ENCODE measurements at regions of chr15 and their contacts with region 1.

Region 1: DNA sequence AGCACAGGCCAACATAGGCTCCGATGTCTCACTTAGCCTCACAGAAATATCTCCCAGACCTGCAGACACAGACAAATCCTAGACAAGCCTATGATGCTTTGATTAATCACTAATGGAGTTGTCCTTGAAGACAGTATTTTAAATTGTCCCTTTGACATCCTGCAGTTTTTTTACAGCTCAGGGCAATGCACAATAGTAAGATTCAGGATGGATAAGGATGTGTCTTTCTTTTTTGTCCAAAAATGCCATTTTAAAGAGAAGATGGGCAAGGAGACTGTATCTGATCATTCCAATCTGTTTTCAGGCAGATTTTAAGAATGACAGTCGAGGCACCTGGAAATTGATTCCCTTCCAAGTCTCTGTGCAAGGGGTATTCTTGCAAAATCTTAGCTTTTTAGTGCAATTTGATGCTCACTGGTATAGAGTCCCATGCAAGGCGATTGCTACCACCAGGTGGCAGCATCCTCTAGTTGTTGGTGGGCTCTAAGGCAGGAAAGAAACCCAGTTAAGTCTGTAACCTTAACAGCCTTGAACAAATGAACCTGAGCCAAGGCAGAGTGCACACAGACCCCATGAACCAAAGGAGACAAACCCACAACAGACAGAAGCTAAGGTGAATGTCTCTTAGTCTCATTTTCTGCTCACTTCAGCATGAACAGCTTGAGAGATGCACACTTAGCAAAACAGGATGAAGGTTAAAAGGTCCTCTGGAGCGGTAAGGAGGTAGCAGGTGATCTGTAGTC is 51.2 kb upstream of the MINAR1 start:
- DNase-seq: peak; percentile 82
- ATAC-seq: peak; percentile 88
- H3K4me3 Mint-ChIP-seq: no peak overlapping the region
- H3K27ac Mint-ChIP-seq: no peak overlapping the region
- H3K4me1 Mint-ChIP-seq: no peaks in the 10 kb centered on the region
- H3K27me3 Mint-ChIP-seq: no peaks in the 10 kb centered on the region

Region 2: GRCh38 chr15:79332831-79333516 is 48.0 kb before region 1 on chr15:
- CTCF ChIA-PET with region 1: interaction called, 27 read pairs
- POLR2A ChIA-PET with region 1: no interaction called
- DNase-seq: no peak
- ATAC-seq: no peak
- H3K4me3 Mint-ChIP-seq: no peak overlapping the region
- H3K27ac Mint-ChIP-seq: no peak overlapping the region
- H3K4me1 Mint-ChIP-seq: no peaks in the 10 kb centered on the region
- H3K27me3 Mint-ChIP-seq: no peaks in the 10 kb centered on the region

Region 3: GRCh38 chr15:79364571-79365240 is 16.2 kb before region 1 on chr15:
- CTCF ChIA-PET with region 1: interaction called, 26 read pairs
- POLR2A ChIA-PET with region 1: no interaction called
- DNase-seq: no peak
- ATAC-seq: no peak
- H3K4me3 Mint-ChIP-seq: no peak overlapping the region
- H3K27ac Mint-ChIP-seq: no peak overlapping the region
- H3K4me1 Mint-ChIP-seq: no peaks in the 10 kb centered on the region
- H3K27me3 Mint-ChIP-seq: no peaks in the 10 kb centered on the region

Region 4: DNA sequence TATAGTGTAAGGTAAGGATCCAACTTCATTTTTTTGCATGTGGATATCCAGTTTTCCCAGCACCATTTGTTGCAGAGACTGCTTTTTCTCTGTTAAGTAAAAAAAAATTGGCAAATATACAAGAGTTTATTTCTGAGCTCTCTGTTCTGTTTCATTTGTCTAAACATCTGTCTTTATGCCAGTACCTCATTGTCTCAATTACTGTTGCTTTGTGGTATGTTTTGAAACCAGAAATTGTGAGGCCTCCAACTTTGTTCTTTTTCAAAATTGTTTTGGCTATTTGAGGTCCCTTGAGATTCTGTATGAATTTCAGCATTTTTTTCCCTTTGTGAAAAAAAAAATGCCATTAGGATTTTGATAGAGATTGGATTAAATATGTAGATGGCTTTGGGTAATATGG is 201.7 kb after region 1 on chr15:
- CTCF ChIA-PET with region 1: interaction called, 12 read pairs
- POLR2A ChIA-PET with region 1: no interaction called
- DNase-seq: no peak
- ATAC-seq: no peak
- H3K4me3 Mint-ChIP-seq: no peak overlapping the region
- H3K27ac Mint-ChIP-seq: no peak overlapping the region
- H3K4me1 Mint-ChIP-seq: no peaks in the 10 kb centered on the region
- H3K27me3 Mint-ChIP-seq: peaks cover 24% of the 10 kb centered on the region

Region 5: DNA sequence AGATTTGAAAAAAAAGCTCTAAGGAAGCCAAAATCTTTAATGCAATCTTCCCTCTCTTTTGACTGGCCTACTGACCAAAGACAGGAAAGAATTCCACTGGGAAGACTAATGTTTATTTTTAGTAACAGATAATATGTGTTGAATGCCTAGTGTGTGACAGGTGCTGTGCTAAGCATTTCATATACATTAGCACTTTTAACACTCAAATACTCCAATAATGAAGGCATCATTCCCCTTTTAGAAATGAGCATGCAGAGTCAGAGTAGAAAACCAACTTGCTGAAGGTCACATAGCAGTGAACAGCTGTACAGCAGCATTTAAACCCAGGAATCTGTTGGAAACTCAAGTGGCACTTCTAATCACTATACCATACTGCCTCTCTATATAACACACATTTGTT is 221.8 kb after region 1 on chr15:
- CTCF ChIA-PET with region 1: interaction called, 169 read pairs
- POLR2A ChIA-PET with region 1: no interaction called
- DNase-seq: no peak
- ATAC-seq: no peak
- H3K4me3 Mint-ChIP-seq: no peak overlapping the region
- H3K27ac Mint-ChIP-seq: no peak overlapping the region
- H3K4me1 Mint-ChIP-seq: no peaks in the 10 kb centered on the region
- H3K27me3 Mint-ChIP-seq: peaks cover 9% of the 10 kb centered on the region